ENCODE measurements at regions of chr6 and their contacts with region 1.

Region 1: DNA sequence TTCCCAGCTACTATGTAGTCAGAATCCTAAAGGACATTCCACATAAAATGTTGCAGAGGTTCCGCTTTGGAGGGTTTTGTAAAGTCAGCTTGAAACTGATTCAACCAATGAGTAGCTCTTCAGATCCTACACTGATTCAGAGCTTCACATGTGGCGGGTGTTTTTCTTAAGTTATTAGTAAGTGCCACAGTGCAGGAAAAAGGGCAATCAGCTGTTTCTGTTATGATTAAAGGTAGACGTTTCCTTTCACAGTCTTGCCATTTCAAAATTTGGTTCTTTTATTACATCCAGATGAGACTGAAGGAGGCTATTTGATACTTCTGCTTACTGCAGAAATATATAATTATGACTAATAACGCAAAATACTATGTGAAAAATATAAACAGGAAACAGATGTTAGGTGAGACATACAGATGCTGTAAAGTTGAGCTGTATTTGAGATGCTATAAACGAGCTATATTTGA is 443.9 kb downstream of the CDKAL1 start:
- DNase-seq: peak; percentile 15
- H3K4me3 Mint-ChIP-seq: no peak overlapping the region
- H3K27ac Mint-ChIP-seq: no peak overlapping the region
- H3K4me1 Mint-ChIP-seq: peaks cover 12% of the 10 kb centered on the region
- H3K27me3 Mint-ChIP-seq: no peaks in the 10 kb centered on the region

Region 2: GRCh38 chr6:20877008-20877937 is 100.9 kb before region 1 on chr6:
- CTCF ChIA-PET with region 1: no interaction called
- POLR2A ChIA-PET with region 1: no interaction called
- intact Hi-C with region 1: loop called (anchors 2 kb)
- DNase-seq: peak; percentile 65
- H3K4me3 Mint-ChIP-seq: no peak overlapping the region
- H3K27ac Mint-ChIP-seq: peak overlapping the region; percentile 65
- H3K4me1 Mint-ChIP-seq: peaks cover 18% of the 10 kb centered on the region
- H3K27me3 Mint-ChIP-seq: no peaks in the 10 kb centered on the region

Measured in activated CD4-positive, alpha-beta memory T cell treated with anti-CD3 and anti-CD28 coated beads for 36 hours (primary cell).